H1 (cell line): ENCODE measurements at regions of chr1 and their contacts with region 1.

Region 1: DNA sequence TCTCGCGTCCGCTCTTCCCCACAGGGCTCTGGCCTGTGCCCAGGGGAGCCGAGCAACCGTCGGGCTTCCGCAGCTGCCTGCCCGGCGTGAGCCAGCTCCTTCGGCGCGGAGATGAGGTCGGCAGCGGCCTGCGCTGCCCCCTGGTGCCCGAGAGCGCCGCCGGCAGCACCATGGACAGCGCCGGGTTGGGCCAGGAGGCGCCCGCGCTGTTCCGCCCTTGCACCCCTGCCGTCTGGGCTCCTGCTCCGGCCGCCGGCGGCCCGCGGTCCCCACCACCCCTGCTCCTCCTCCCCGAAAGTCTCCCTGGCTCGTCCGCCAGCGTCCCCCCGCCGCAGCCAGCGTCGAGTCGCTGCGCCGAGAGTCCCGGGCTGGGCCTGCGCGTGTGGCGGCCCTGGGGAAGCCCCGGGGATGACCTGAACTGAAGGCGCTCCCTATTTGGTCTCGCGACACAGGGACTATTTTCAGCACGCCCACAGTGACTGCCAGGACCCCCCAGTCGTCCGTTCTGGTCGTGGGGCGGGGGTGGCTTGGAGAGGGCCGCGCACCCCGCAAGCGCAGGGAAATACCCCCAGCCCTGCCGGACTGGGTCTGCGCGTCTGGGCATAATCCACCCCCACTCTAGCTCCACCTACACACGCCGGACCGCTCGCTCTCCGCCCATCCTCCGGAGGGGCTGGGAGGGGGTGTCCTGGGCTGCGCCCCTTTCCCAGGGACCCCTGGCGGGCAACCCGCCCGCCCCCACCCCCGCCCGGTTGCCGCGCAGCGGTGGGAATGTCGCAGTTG is 1.3 kb downstream of the HES3 start:
- DNase-seq: peak in 1 of 2 experiments; percentile 94
- H3K4me3 ChIP-seq: peak overlapping the region; percentile 59 to 91 (median 80)
- H3K27ac ChIP-seq: no peak overlapping the region
- H3K4me1 ChIP-seq: peaks cover 14 to 40% (median 31%) of the 10 kb centered on the region in 4 experiments
- H3K27me3 ChIP-seq: peaks cover 10 to 36% (median 25%) of the 10 kb centered on the region in 4 experiments
- CTCF ChIP-seq: peak in 2 of 3 experiments; percentile 82 to 85; a peak in 3 of 4 replicates
- EP300 ChIP-seq: peak; percentile 42 to 66; a peak in 2 of 3 replicates
- POLR2A ChIP-seq: no peak
- RAD21 ChIP-seq: peak; percentile 67 to 80

Region 2: DNA sequence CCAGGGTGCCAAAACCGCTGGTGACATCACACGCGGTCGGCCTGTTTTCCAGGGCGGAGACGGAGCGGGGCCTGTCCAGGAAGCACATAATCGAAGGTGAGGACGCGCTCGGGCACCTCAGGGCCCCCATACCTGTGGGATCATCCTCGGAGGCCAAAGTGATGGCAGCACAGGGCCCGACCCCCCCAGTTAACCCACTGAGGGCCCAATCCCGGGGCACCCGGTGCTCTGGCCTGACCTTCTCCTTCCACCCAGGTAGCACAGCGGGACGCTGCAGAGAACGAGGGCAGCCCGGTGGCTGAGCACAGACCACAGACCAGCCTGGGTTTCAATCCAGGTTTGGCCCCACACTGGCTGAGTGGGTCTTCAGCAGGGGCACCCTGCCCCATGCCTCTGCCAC is 156.3 kb before region 1 on chr1:
- CTCF ChIA-PET with region 1: no interaction called
- POLR2A ChIA-PET with region 1: no interaction called
- DNase-seq: no peak
- H3K4me3 ChIP-seq: no peak overlapping the region
- H3K27ac ChIP-seq: no peak overlapping the region
- H3K4me1 ChIP-seq: no peaks in the 10 kb centered on the region
- H3K27me3 ChIP-seq: no peaks in the 10 kb centered on the region
- CTCF ChIP-seq: no peak
- EP300 ChIP-seq: no peak
- POLR2A ChIP-seq: no peak
- RAD21 ChIP-seq: no peak

Region 3: DNA sequence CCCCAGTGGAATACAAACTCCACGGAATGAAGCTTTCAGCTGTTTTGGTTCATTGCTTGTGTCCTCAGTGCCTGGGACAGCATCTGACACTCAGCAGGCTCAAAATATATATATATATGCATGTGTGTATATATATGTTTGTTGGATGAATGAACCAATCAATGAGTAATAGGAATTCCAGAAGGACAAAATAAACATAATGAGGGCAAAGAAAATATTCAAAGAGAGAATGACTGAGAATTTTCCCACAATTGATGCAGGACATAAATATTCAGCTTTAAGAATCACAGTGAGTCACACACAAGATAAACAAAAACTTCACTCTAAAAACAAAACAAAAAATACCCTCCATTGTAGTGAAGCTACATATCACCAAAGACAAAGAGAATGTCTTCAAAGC is 129.1 kb before region 1 on chr1:
- CTCF ChIA-PET with region 1: no interaction called
- POLR2A ChIA-PET with region 1: no interaction called
- DNase-seq: no peak
- H3K4me3 ChIP-seq: no peak overlapping the region
- H3K27ac ChIP-seq: no peak overlapping the region
- H3K4me1 ChIP-seq: no peaks in the 10 kb centered on the region
- H3K27me3 ChIP-seq: 0 out of 7 replicates have a peak, but pooled peaks cover 0 to 2% (median 0%) of the 10 kb centered on the region in 4 experiments
- CTCF ChIP-seq: no peak
- EP300 ChIP-seq: no peak
- POLR2A ChIP-seq: no peak
- RAD21 ChIP-seq: no peak

Region 4: GRCh38 chr1:6170742-6171201 is 74.5 kb before region 1 on chr1:
- CTCF ChIA-PET with region 1: no interaction called
- POLR2A ChIA-PET with region 1: no interaction called
- DNase-seq: no peak
- H3K4me3 ChIP-seq: no peak overlapping the region
- H3K27ac ChIP-seq: no peak overlapping the region
- H3K4me1 ChIP-seq: no peaks in the 10 kb centered on the region; a peak in 1 of 7 replicates
- H3K27me3 ChIP-seq: no peaks in the 10 kb centered on the region; a peak in 1 of 7 replicates
- CTCF ChIP-seq: no peak
- EP300 ChIP-seq: no peak
- POLR2A ChIP-seq: no peak
- RAD21 ChIP-seq: no peak

Region 5: DNA sequence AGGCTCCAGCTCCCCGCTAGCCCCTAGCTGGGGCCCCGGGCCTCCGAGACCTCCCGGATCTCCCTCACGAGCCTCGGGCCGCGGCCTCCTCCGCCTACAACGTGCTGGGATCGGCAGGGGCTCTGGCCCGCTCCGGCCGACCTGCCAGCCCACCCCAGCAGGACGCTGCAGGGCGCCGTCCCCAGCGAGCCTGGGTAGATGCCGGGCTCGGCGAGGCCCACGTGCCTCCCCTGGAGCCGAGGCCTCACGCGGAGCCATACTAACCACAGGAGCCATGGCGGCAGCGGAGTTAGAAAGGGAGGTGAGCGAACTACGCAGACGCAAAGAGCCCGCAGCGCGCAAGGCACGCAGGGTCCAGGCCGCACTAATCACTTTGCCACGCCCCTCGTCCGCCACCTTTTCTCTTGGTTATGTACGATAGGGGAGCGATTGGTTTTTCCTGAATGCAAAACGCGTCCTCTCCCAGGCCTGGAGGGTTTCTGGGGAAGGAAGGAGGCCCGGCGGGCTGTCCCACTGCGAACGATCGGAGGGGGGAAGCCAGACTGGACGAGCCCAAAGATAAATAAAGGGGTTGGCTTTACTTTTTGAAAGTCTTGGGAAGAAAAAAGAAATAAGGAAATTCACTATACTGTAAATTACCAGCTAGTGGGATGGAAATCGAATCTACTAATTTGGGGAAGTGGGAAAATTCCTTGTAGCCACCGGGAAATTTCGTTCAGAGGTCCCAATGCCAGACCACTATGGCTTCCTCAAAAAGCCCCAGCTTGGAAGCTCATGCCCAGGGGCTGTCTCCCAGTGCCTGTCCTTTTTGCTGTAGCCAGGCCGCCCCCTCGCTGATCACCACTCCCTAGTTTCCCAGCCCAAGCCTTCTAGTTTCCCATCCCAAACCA is 45.7 kb before region 1 on chr1 and contains the start of gene RPL22:
- CTCF ChIA-PET with region 1: interaction called, 353 read pairs
- POLR2A ChIA-PET with region 1: interaction called, 78 read pairs
- DNase-seq: peak; percentile 94 to 96
- H3K4me3 ChIP-seq: peak within 1 kb of the TSS; percentile 69 to 98 (median 86)
- H3K27ac ChIP-seq: peak within 1 kb of the TSS; percentile 95
- H3K4me1 ChIP-seq: peaks cover 6 to 13% (median 8%) of the 10 kb centered on the region in 4 experiments; a peak in 6 of 7 replicates
- H3K27me3 ChIP-seq: no peaks in the 10 kb centered on the region
- CTCF ChIP-seq: no peak; a peak in 1 of 4 replicates
- EP300 ChIP-seq: peak in 1 of 2 experiments; percentile 99; a peak in 2 of 3 replicates
- POLR2A ChIP-seq: peak; percentile 44 to 89
- RAD21 ChIP-seq: no peak
- total RNA-seq, gene RPL22: 521 and 545 TPM in 2 replicates

Region 6: DNA sequence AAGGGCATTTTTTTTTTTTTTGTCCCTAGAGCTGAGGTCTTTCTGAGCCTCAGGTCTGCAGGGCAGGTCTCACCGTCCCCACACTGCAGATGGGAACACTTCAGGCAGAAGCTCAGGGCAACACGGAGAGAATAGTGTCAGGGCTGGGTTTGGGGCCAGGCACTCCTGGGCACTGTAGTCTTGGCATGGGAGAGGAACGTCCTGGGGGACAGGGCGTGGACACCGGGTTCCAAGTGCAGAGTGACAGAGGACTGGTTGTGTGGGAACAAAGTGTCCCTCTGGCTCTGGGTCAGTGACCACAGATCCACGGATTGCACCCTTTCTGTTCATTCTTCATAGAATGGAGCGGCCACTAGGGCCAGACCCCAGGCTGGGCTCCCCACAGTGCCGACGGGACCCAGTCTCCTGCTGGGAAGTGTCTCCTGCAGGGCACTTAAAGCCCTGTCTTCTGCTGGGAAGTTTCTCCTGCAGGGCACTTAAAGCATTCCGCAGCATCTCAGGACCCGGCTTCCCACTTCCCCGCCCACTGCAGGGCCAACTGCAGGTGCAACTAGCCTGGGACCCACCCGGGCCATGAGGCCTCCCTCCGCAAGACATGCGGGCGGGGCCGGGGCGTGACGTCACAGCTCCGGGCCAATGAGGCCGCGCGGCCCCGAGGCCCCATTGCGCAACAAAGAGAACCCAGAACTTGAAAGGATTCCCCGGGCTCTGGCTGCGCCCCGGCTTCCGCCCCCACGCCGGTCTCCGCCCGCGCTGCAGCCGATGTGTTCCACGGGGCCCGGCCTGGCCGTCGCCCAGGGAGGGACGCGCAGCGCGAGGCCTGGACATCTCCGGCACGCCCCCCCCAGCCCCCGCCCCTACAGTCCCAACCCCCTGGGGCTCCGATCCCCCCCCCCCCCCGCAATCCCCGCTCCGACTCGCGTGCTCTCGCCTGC is 14.5 kb after region 1 on chr1:
- CTCF ChIA-PET with region 1: interaction called, 51 read pairs
- POLR2A ChIA-PET with region 1: interaction called, 17 read pairs
- DNase-seq: peak in 1 of 2 experiments; percentile 91
- H3K4me3 ChIP-seq: peak overlapping the region; percentile 45 to 86 (median 50)
- H3K27ac ChIP-seq: no peak overlapping the region
- H3K4me1 ChIP-seq: peaks cover 0 to 13% (median 3%) of the 10 kb centered on the region in 4 experiments; a peak in 6 of 7 replicates
- H3K27me3 ChIP-seq: peaks cover 0 to 20% (median 13%) of the 10 kb centered on the region in 4 experiments; a peak in 3 of 7 replicates
- CTCF ChIP-seq: no peak
- EP300 ChIP-seq: no peak
- POLR2A ChIP-seq: no peak
- RAD21 ChIP-seq: no peak

Region 7: DNA sequence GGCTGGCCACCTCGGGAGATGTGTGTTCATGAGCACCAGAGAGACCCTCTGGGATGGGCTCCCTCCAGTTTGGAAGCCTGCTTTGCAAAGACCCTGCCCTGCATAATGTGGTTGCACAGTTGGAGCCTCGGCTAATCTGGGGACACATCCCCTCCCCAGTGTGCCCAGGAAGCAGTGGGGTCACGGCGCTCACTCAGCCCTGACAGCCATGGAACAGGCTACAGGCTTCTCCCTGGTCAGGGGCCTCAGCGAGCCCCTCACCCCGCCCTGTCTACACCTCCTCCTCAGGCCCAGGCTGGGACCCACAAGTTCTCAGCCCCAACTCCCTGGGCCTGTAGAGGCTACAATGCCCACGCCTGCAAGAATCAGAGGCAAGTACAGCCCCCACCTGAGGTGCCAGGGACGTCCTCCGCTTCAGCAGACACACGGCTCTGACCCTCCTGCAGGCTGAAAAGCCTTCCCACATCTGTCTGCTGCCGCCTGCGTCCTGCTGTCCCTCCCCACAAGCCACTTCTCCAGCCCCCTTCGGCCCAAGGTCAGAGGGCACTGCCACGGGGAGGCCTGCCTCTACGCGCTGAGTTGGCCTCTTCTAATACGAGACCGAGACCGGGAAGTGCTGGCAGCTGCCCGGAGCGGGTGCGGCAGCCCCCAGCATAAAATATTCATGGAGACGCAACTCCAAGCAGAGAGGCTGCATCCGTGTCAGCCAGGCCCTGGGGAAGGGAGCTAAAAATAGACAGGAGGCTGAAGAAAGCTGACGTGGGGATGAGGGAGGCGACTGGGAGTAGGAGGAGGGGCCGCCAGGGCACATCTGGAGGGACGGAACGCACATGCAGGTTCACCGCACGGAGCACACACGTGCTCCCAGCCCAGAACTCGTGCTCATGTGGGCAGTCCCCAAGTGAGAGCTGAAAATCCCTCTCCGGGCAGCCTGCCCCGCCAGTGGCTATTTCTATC is 30.8 kb after region 1 on chr1:
- CTCF ChIA-PET with region 1: interaction called, 122 read pairs
- POLR2A ChIA-PET with region 1: interaction called, 3 read pairs
- DNase-seq: no peak
- H3K4me3 ChIP-seq: no peak overlapping the region
- H3K27ac ChIP-seq: no peak overlapping the region
- H3K4me1 ChIP-seq: peaks cover 0 to 25% (median 13%) of the 10 kb centered on the region in 4 experiments; a peak in 6 of 7 replicates
- H3K27me3 ChIP-seq: no peaks in the 10 kb centered on the region
- CTCF ChIP-seq: no peak
- EP300 ChIP-seq: no peak
- POLR2A ChIP-seq: no peak
- RAD21 ChIP-seq: no peak

Region 8: DNA sequence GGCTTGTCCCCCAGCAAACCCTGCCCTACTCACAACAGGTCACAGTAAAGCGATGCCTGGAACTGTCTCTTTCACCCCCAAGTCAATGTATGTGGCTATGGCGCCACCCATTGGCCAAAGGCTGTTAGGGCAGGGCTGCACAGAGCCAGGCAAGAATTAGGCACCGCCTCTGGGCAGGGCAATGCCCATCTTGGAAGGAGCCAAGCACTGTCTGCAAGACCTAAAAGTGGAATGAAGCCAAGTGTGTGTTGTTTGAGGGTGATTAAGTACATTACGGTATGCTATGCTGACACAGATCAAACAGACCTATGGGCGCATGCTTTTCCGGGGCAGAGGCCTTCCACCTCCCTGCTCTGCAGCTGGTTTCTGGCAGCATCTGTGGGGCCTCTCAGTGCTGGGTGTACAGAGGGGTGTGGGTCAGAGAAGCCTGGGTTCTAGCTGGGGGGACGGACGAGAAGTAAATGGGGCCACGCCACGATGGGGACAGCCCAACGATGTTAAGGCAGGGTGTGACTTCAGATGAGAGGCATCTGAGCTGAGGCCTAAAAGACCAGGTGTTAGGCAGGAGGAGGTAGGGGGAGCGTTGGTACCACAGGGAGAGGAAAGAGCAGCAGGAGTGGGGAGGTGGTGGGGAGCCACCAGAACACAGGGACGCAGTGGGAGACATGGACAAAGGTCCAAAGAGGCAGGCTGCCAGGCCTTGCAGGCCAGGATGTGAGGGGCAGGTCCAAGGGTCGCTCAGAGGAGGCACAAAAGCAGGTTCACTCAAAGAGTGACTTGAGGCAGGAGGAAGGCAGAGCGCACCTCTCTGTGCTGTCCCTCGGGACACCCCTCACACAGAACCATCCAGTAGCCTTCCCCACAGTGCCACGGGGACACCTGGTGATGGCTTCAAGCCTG is 98.5 kb after region 1 on chr1:
- CTCF ChIA-PET with region 1: interaction called, 280 read pairs
- POLR2A ChIA-PET with region 1: interaction called, 9 read pairs
- DNase-seq: peak; percentile 31 to 92
- H3K4me3 ChIP-seq: no peak overlapping the region
- H3K27ac ChIP-seq: no peak overlapping the region
- H3K4me1 ChIP-seq: peaks cover 3 to 7% (median 6%) of the 10 kb centered on the region in 4 experiments; a peak in 5 of 7 replicates
- H3K27me3 ChIP-seq: no peaks in the 10 kb centered on the region
- CTCF ChIP-seq: peak in 2 of 3 experiments; percentile 97 to 100; a peak in 3 of 4 replicates
- EP300 ChIP-seq: no peak
- POLR2A ChIP-seq: no peak
- RAD21 ChIP-seq: peak; percentile 99

Region 9: GRCh38 chr1:6393400-6394187 is 148.3 kb after region 1 on chr1 and contains the start of gene ACOT7:
- CTCF ChIA-PET with region 1: interaction called, 10 read pairs
- POLR2A ChIA-PET with region 1: interaction called, 3 read pairs
- DNase-seq: peak in 1 of 2 experiments; percentile 88
- H3K4me3 ChIP-seq: peak within 1 kb of the TSS; percentile 66 to 91 (median 72)
- H3K27ac ChIP-seq: peak within 1 kb of the TSS; percentile 91
- H3K4me1 ChIP-seq: peaks cover 0 to 11% (median 9%) of the 10 kb centered on the region in 4 experiments; a peak in 5 of 7 replicates
- H3K27me3 ChIP-seq: peaks cover 0 to 3% (median 0%) of the 10 kb centered on the region in 4 experiments; a peak in 3 of 7 replicates
- CTCF ChIP-seq: no peak
- EP300 ChIP-seq: no peak
- POLR2A ChIP-seq: peak in 1 of 2 experiments; percentile 52; a peak in 1 of 3 replicates
- RAD21 ChIP-seq: no peak
- total RNA-seq, gene ACOT7: 150 and 151 TPM in 2 replicates

Region 10: GRCh38 chr1:6414443-6414844 is 169.2 kb after region 1 on chr1:
- CTCF ChIA-PET with region 1: interaction called, 15 read pairs
- POLR2A ChIA-PET with region 1: interaction called, 3 read pairs
- DNase-seq: peak in 1 of 2 experiments; percentile 86
- H3K4me3 ChIP-seq: no peak overlapping the region; a peak in 1 of 8 replicates
- H3K27ac ChIP-seq: no peak overlapping the region
- H3K4me1 ChIP-seq: peaks cover 2 to 10% (median 5%) of the 10 kb centered on the region in 4 experiments; a peak in 6 of 7 replicates
- H3K27me3 ChIP-seq: peaks cover 29 to 52% (median 50%) of the 10 kb centered on the region in 4 experiments
- CTCF ChIP-seq: peak; percentile 79 to 91 (median 88)
- EP300 ChIP-seq: peak in 1 of 2 experiments; percentile 72; a peak in 1 of 3 replicates
- POLR2A ChIP-seq: no peak
- RAD21 ChIP-seq: peak; percentile 43 to 66